ENCODE measurements at regions of chr2 and their contacts with region 1.

Region 1: GRCh38 chr2:50401772-50402653 is 629.9 kb downstream of the NRXN1 start:
- DNase-seq: peak; percentile 79
- ATAC-seq: peak; percentile 78
- H3K4me3 Mint-ChIP-seq: no peak overlapping the region
- H3K27ac Mint-ChIP-seq: no peak overlapping the region
- H3K4me1 Mint-ChIP-seq: peaks cover 33% of the 10 kb centered on the region
- H3K27me3 Mint-ChIP-seq: no peaks in the 10 kb centered on the region
- CTCF ChIP-seq: peak; percentile 71

Region 2: GRCh38 chr2:49616800-49617199 is 785.2 kb before region 1 on chr2:
- CTCF ChIA-PET with region 1: interaction called, 16 read pairs
- POLR2A ChIA-PET with region 1: no interaction called
- DNase-seq: no peak
- ATAC-seq: peak; percentile 86
- H3K4me3 Mint-ChIP-seq: no peak overlapping the region
- H3K27ac Mint-ChIP-seq: no peak overlapping the region
- H3K4me1 Mint-ChIP-seq: no peaks in the 10 kb centered on the region
- H3K27me3 Mint-ChIP-seq: no peaks in the 10 kb centered on the region
- CTCF ChIP-seq: peak; percentile 31; the same call in 1 of the 2 replicates

Region 3: DNA sequence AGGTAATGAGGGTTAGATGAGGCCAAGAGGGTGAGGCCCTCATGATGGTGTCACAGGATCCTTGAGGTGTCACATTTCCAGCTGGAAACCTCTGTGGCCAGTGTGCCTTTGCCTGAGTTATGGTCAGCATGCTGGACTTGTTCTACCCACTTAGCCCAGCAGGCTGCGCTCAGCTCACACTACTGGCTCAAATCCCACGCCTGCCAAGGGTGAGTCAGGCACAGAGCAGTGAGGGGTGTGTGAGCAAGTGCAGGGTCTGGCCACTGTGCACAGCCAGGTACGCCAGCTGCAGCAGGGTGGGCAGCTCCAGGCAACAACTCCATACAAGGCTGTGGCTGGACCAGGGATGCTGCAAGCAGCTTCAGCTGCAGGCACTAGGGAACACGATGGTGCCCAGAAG is 631.1 kb before region 1 on chr2:
- CTCF ChIA-PET with region 1: interaction called, 46 read pairs
- POLR2A ChIA-PET with region 1: no interaction called
- DNase-seq: peak; percentile 84
- ATAC-seq: peak; percentile 100
- H3K4me3 Mint-ChIP-seq: no peak overlapping the region
- H3K27ac Mint-ChIP-seq: no peak overlapping the region
- H3K4me1 Mint-ChIP-seq: peaks cover 4% of the 10 kb centered on the region; the same call in 1 of the 2 replicates
- H3K27me3 Mint-ChIP-seq: no peaks in the 10 kb centered on the region
- CTCF ChIP-seq: peak; percentile 59

Region 4: DNA sequence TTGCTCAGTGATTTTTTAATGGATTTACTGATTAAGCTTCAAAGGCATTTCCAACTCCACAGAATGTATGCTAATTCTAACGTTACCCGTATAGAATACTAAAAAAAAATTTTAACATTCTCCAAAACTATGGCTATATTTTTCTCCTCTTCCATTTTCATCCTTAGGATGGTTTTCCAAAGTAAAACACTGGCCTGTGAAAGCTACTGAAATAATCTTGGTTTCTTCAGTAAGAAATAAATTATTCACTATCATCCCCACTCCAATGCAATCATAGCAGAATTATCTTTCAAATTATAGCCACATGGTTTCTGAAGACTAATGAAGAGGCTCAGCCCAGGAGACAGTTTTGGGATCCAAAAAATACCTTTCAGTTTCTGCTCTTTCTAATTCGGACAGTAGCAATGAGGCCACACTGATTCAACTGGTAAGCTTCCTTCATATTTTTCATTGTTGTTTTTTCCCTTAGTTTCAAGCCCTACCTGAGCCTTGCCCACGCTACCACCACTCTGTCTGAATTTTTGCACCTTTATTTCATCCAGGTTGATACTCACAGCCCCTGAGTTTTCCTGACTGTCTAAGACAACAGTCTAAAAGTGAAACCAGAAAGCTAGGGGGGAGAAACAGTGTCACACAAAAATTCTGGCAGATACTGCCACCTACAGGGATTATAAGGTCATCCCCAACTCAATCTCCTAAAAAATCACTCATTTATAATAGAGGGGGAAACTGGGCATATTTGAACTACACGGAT is 258.0 kb before region 1 on chr2:
- CTCF ChIA-PET with region 1: interaction called, 13 read pairs
- POLR2A ChIA-PET with region 1: no interaction called
- DNase-seq: no peak
- ATAC-seq: peak; percentile 77
- H3K4me3 Mint-ChIP-seq: no peak overlapping the region
- H3K27ac Mint-ChIP-seq: peak overlapping the region; percentile 88; the same call in 1 of the 2 replicates
- H3K4me1 Mint-ChIP-seq: peaks cover 12% of the 10 kb centered on the region
- H3K27me3 Mint-ChIP-seq: no peaks in the 10 kb centered on the region
- CTCF ChIP-seq: peak; percentile 43; the same call in 1 of the 2 replicates

Region 5: GRCh38 chr2:50364511-50364910 is 37.5 kb before region 1 on chr2:
- CTCF ChIA-PET with region 1: no interaction called
- POLR2A ChIA-PET with region 1: no interaction called
- DNase-seq: no peak
- ATAC-seq: no peak
- H3K4me3 Mint-ChIP-seq: no peak overlapping the region
- H3K27ac Mint-ChIP-seq: no peak overlapping the region
- H3K4me1 Mint-ChIP-seq: no peaks in the 10 kb centered on the region
- H3K27me3 Mint-ChIP-seq: no peaks in the 10 kb centered on the region
- CTCF ChIP-seq: no peak

Region 6: DNA sequence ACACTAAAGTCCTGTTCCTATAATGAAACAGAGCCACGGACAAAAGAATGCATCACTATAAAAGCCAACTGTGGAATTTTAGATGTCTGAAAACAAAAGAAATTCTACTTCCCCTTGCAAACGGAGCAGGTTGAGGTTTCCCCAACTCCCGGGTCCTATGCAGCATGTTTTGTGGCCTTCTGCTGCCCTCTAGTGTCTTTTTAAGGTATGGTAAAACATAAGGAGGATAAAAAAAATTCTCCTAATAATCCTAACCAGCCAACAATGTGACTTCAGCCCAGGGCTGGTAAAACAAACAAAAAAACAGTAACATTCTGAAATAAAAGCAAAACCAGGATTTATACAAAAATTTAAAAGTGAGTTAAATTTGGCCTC is 90.5 kb after region 1 on chr2:
- CTCF ChIA-PET with region 1: interaction called, 11 read pairs
- POLR2A ChIA-PET with region 1: no interaction called
- DNase-seq: peak; percentile 33
- ATAC-seq: peak; percentile 80
- H3K4me3 Mint-ChIP-seq: no peak overlapping the region
- H3K27ac Mint-ChIP-seq: no peak overlapping the region
- H3K4me1 Mint-ChIP-seq: peaks cover 14% of the 10 kb centered on the region
- H3K27me3 Mint-ChIP-seq: no peaks in the 10 kb centered on the region
- CTCF ChIP-seq: no peak; the same call in 1 of the 2 replicates

Measured in WTC11 (cell line).